Activated naive CD4-positive, alpha-beta T cell treated with anti-CD3 and anti-CD28 coated beads for 36 hours (primary cell): ENCODE measurements at regions of chr11 and their contacts with region 1.

Region 1: GRCh38 chr11:110818032-110818687 is 105.9 kb upstream of the ARHGAP20 start:
- DNase-seq: peak; percentile 57
- H3K4me3 Mint-ChIP-seq: no peak overlapping the region
- H3K27ac Mint-ChIP-seq: peak overlapping the region; percentile 60
- H3K4me1 Mint-ChIP-seq: peaks cover 12% of the 10 kb centered on the region
- H3K27me3 Mint-ChIP-seq: peaks cover 8% of the 10 kb centered on the region

Region 2: DNA sequence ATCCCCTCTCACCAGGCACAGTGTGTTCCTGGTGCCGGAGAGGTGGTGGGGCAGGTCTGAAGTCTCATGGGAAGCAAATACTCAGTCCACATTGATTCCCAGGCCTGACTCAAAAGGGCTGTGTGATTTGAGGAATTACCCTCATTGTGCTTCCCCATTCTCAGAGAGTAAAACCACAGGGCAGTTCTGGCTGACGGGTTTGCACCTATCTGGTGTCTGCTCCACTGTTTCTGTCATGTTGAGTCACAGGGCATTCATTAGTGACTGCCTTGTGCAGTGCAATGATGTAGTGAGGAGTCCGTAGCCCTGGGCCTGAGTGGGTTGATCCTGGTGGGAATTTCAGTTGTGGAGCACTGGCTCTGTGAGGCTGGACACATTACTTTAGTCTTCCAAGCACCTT is 20.7 kb before region 1 on chr11:
- CTCF ChIA-PET with region 1: interaction called, 3 read pairs
- intact Hi-C with region 1: loop called (anchors 1 kb)
- DNase-seq: peak; percentile 22
- H3K4me3 Mint-ChIP-seq: no peak overlapping the region
- H3K27ac Mint-ChIP-seq: no peak overlapping the region
- H3K4me1 Mint-ChIP-seq: peaks cover 12% of the 10 kb centered on the region
- H3K27me3 Mint-ChIP-seq: peaks cover 3% of the 10 kb centered on the region

Region 3: GRCh38 chr11:110907629-110908028 is 89.5 kb after region 1 on chr11:
- CTCF ChIA-PET with region 1: no interaction called
- intact Hi-C with region 1: loop called (anchors 5 kb)
- DNase-seq: peak; percentile 32
- H3K4me3 Mint-ChIP-seq: no peak overlapping the region
- H3K27ac Mint-ChIP-seq: peak overlapping the region; percentile 48
- H3K4me1 Mint-ChIP-seq: peaks cover 29% of the 10 kb centered on the region
- H3K27me3 Mint-ChIP-seq: no peaks in the 10 kb centered on the region